ENCODE measurements at regions of chrX and their contacts with region 1.

Region 1: GRCh38 chrX:100895365-100896075 is 21.4 kb upstream of the NOX1 start:
- DNase-seq: peak; percentile 93
- H3K4me3 ChIP-seq: no peak overlapping the region
- H3K27ac ChIP-seq: peak overlapping the region; percentile 74
- H3K4me1 ChIP-seq: peaks cover 17% of the 10 kb centered on the region
- H3K27me3 ChIP-seq: peaks cover 2% of the 10 kb centered on the region
- CTCF ChIP-seq: peak; percentile 44 to 70

Region 2: DNA sequence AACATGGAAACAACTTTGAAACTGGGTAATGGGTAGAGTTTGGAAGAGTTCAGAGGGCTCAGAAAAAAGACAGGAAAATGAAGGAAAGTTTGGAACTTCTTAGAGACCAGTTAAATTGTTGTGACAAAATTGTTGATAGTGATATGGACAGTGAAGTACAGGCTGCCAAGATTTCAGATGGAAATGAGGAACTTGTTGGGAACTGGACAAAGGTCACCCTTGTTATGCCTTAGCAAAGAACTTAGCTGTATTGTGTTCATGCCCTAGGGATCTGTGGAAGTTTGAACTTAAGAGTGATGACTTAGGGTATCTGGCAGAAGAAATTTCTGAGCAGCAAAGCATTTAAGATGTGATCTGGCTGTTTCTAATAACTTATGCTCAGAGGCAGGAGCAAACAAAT is 68.8 kb after region 1 on chrX:
- CTCF ChIA-PET with region 1: no interaction called
- dilution Hi-C with region 1: loop called (anchors 10 kb)
- in situ Hi-C with region 1: no loop called
- intact Hi-C with region 1: no loop called
- DNase-seq: no peak
- H3K4me3 ChIP-seq: no peak overlapping the region
- H3K27ac ChIP-seq: no peak overlapping the region
- H3K4me1 ChIP-seq: no peaks in the 10 kb centered on the region
- H3K27me3 ChIP-seq: no peaks in the 10 kb centered on the region
- CTCF ChIP-seq: no peak

Region 3: DNA sequence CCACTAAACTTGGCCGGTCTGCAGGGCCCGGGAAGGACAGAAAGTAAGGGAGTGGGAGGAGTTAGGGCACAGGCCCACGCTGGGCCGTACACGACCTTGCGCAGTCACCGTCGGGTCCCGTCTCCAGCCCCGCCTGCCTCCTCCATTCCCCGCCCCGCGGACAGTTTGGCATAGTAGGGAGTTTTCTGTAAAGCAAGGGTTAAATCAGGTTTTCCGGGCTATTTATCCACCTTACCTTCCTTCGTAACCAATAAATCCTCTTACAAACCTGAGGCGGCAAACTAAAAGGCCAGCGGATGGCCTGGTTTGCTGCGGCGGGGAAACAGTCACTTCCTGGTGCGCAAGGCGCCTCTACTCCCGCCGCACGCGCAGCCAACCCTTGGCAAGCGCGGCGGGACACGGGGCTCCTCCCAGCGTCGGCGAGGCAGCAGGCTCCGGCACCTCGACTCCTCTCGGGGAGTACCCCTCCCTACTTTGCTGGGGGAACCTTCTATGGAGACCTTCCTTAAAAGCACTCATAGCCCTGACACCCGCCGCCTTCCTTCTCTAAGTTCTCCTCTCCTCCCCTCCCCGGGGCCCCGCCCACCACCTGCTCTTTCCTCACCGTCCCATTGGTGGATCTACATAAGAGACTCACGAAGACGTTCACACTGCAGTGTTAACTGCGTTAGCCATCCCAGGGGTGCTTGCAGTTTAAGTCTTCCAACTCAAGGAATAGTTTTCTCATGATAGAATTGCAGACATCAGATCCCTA is 156.2 kb after region 1 on chrX and contains the start of gene TRMT2B:
- CTCF ChIA-PET with region 1: no interaction called
- dilution Hi-C with region 1: no loop called
- in situ Hi-C with region 1: no loop called
- intact Hi-C with region 1: loop called (anchors 1 kb)
- DNase-seq: peak; percentile 68
- H3K4me3 ChIP-seq: peak within 1 kb of the TSS; percentile 51 to 60 (median 58)
- H3K27ac ChIP-seq: peak within 1 kb of the TSS; percentile 49
- H3K4me1 ChIP-seq: no peaks in the 10 kb centered on the region
- H3K27me3 ChIP-seq: no peaks in the 10 kb centered on the region
- CTCF ChIP-seq: no peak
- total RNA-seq, gene TRMT2B: 15.2 to 15.5 TPM

Region 4: GRCh38 chrX:101206471-101206870 is 311.0 kb after region 1 on chrX:
- CTCF ChIA-PET with region 1: no interaction called
- dilution Hi-C with region 1: no loop called
- in situ Hi-C with region 1: no loop called
- intact Hi-C with region 1: loop called (anchors 1 kb)
- DNase-seq: peak; percentile 32
- H3K4me3 ChIP-seq: no peak overlapping the region
- H3K27ac ChIP-seq: no peak overlapping the region
- H3K4me1 ChIP-seq: no peaks in the 10 kb centered on the region
- H3K27me3 ChIP-seq: peaks cover 2% of the 10 kb centered on the region
- CTCF ChIP-seq: peak; percentile 34 to 51

Measured in mammary epithelial cell (primary cell).